Prostate gland (tissue), 2 donors: ENCODE measurements at regions of chr4 and their contacts with region 1.

Region 1: GRCh38 chr4:182938205-182938645 is 21.0 kb upstream of the DCTD start:
- DNase-seq: peak; percentile 32
- H3K4me3 ChIP-seq: no peak overlapping the region
- H3K27ac ChIP-seq: no peak overlapping the region
- H3K4me1 ChIP-seq: no peaks in the 10 kb centered on the region
- H3K27me3 ChIP-seq: no peaks in the 10 kb centered on the region
- CTCF ChIP-seq: peak; percentile 30 to 79 (median 74)
- POLR2A ChIP-seq: no peak

Region 2: DNA sequence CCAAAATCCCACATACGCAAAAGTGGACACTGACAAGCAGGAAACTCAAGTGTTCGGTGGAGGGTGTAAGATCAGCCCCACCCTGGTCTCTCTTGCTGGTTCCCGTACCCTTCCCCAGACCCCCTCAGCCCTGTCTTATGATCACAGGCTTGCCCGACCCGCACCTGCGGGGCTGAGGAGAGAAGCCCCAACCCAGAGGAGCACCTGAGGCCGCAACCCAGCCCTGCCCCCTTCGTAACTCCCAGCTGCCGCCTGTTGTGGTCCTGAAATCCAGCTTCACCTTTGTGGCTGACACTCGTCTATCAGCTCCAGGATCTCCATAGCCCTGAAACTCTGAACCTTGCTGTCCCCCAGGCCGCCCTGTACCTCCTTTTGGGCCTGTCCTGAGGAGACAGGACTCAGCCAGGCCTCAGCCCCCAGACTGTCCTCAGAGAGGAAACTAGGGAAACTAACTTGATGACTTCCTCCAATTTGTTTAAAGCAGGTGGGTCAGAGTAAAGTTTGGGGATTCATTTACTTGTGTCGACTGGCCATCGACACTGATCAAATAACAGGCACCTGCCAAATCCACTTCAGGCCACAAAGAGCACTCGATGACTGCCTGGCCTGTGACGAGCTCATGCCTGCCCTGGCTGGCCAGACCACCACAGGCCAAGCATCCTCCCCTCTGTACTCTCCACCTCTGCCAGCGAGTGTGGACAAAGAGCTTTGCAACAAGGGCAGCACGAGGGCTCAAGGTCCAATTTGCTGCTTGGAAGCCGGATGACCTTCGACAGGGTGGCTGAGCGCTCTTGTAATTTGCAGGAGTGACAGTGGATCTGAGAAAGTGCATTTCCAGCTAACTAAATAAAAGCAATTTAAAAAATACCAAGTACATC is 40.4 kb before region 1 on chr4:
- intact Hi-C with region 1: no loop called
- DNase-seq: no peak
- H3K4me3 ChIP-seq: no peak overlapping the region
- H3K27ac ChIP-seq: no peak overlapping the region
- H3K4me1 ChIP-seq: no peaks in the 10 kb centered on the region
- H3K27me3 ChIP-seq: no peaks in the 10 kb centered on the region
- CTCF ChIP-seq: no peak
- POLR2A ChIP-seq: no peak

Region 3: GRCh38 chr4:183261953-183262775 is 323.9 kb after region 1 on chr4:
- intact Hi-C with region 1: loop called (anchors 5 kb)
- DNase-seq: peak; percentile 76
- H3K4me3 ChIP-seq: no peak overlapping the region
- H3K27ac ChIP-seq: peak overlapping the region; percentile 60 to 67
- H3K4me1 ChIP-seq: peaks cover 6% of the 10 kb centered on the region
- H3K27me3 ChIP-seq: no peaks in the 10 kb centered on the region
- CTCF ChIP-seq: peak; percentile 75 to 91 (median 81)
- POLR2A ChIP-seq: no peak

Region 4: DNA sequence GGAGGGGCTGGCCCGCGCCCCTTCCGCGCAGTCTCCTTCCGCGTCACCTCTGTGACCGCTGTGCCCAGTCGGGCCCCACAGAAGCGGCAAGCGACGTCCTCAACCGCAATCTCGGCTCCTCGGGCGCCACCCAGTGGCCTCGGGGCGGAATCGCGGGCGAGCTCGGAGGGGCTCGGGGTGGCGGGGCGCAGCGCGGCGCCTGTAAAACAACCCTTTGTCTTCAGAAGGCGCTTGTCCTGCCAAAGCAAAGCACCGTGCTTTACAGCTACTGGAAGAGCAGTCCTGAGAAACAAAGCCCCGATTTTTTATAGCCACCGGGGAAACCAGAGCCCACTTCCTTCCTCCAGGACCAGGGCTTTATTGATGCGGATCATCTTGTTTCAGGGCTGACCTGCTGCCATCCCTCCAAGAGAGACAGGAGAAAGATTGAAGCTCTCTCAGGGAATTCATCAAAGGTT is 468.9 kb after region 1 on chr4:
- intact Hi-C with region 1: loop called (anchors 10 kb)
- DNase-seq: peak; percentile 75
- H3K4me3 ChIP-seq: peak overlapping the region; percentile 20 to 25
- H3K27ac ChIP-seq: peak overlapping the region; percentile 64 to 77
- H3K4me1 ChIP-seq: no peaks in the 10 kb centered on the region
- H3K27me3 ChIP-seq: no peaks in the 10 kb centered on the region
- CTCF ChIP-seq: peak; percentile 71 to 94 (median 88)
- POLR2A ChIP-seq: no peak